ENCODE measurements at regions of chr2 and their contacts with region 1.

Region 1: GRCh38 chr2:3728104-3729054 is 25.0 kb downstream of the DCDC2C start:
- DNase-seq: no peak
- ATAC-seq: peak; percentile 19 to 22

Region 2: DNA sequence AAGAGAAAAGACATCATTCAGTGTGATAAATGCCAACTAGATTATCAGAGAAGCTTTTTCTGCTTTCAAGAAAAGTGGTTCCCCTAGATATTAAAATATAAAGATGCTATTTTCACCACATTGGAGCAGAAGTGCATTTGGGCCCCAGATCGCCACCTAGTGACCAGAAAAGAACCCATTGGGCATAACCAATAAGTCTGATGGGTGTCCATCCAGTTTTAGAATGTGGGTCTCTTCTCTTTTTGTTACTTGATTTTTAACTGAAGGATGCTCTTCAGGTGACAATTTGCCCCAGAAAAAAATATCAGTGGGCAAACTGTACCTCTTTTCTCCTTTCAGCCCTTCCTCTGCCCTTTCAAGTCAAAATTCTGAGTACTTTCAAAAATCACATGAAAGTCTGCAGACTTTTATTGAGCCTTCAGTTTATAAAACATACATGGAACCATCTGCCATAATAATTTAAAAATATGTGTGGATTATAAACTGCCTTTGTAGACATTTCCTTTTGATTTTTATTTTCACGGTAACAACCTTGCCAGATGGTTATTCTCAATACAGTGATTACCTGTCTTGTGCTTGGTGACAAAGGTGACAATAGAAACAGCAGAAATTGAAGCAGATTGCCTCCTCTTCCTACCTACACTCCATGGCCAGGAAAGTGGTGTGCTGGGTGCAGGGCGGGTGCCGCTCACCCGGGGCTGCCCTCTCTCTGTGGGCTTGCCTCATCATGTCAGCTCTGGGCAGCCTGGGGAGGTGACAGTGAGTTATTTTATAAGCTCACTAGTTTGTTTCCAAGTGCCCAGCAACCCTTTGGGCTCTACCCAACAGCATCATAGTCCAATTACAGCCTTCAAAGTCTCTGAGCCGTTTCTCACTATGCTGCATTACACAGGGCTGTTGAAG is 99.5 kb after region 1 on chr2:
- intact Hi-C with region 1: loop called in 1 of 2 experiments (anchors 5 kb)
- DNase-seq: no peak
- ATAC-seq: no peak

Measured in left cardiac atrium (tissue), 4 donors.